Activated CD8-positive, alpha-beta T cell treated with anti-CD3 and anti-CD28 coated beads for 36 hours (primary cell): ENCODE measurements at regions of chr1 and their contacts with region 1.

Region 1: DNA sequence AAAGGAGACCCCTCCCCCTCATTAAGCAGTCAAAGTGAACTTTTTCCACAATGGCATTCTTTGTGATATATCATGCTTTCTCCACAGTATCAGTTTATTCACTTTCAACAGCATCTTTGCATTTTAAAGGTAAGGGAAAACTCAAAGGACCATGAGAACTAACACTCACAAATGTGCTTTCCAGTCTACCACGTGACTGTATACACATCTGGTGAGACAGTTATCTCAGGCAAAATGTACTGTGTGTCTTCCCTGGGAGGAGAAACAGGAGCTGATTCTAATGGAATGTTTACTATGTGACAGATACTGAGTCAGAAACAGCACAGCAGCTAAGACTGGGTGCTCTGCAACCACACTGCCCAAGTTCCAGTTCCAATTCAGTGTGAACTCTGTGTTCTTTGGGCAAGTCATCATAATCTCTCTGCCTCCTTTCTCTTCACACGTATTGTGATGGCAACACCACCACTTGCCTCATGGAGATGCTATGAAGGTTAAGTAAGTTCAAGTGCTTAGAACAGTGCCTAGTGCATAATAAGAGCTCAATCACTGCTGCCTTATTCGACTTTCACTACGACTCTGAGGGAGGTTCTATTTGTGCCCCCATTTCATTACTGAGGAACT is 79.0 kb downstream of the SLC45A1 start:
- DNase-seq: peak; percentile 60
- ATAC-seq: peak; percentile 87
- H3K4me3 Mint-ChIP-seq: peak overlapping the region; percentile 17
- H3K27ac Mint-ChIP-seq: peak overlapping the region; percentile 83
- H3K4me1 Mint-ChIP-seq: peaks cover 65% of the 10 kb centered on the region
- H3K27me3 Mint-ChIP-seq: no peaks in the 10 kb centered on the region
- CTCF ChIP-seq: no peak

Region 2: GRCh38 chr1:8154621-8155052 is 242.3 kb before region 1 on chr1:
- CTCF ChIA-PET with region 1: no interaction called
- POLR2A ChIA-PET with region 1: no interaction called
- intact Hi-C with region 1: no loop called
- DNase-seq: no peak
- ATAC-seq: no peak
- H3K4me3 Mint-ChIP-seq: no peak overlapping the region
- H3K27ac Mint-ChIP-seq: no peak overlapping the region
- H3K4me1 Mint-ChIP-seq: peaks cover 38% of the 10 kb centered on the region
- H3K27me3 Mint-ChIP-seq: peaks cover 22% of the 10 kb centered on the region
- CTCF ChIP-seq: no peak

Region 3: DNA sequence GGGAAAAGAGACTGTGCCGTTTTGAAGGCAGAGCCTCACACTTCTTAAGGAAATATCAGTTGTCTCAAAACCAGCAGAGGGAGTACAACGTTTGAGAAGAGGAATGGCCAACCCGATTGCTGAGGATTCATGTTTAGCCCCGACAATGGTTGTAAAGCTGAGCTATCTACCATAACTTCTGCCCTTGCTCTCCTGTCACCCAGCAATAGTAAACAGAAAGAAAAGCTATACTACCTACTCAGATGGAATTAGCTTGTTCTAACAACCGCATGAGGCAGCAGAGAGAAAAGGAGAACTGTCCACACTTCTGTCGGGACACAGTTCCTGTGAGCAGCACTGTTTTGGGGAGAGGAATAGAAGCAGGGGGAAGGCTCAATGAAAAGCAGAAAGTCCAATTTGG is 12.2 kb after region 1 on chr1:
- CTCF ChIA-PET with region 1: interaction called, 6 read pairs
- POLR2A ChIA-PET with region 1: interaction called, 14 read pairs
- intact Hi-C with region 1: no loop called
- DNase-seq: no peak
- ATAC-seq: peak; percentile 49
- H3K4me3 Mint-ChIP-seq: no peak overlapping the region
- H3K27ac Mint-ChIP-seq: peak overlapping the region; percentile 58
- H3K4me1 Mint-ChIP-seq: peaks cover 55% of the 10 kb centered on the region
- H3K27me3 Mint-ChIP-seq: no peaks in the 10 kb centered on the region
- CTCF ChIP-seq: peak; percentile 42

Region 4: DNA sequence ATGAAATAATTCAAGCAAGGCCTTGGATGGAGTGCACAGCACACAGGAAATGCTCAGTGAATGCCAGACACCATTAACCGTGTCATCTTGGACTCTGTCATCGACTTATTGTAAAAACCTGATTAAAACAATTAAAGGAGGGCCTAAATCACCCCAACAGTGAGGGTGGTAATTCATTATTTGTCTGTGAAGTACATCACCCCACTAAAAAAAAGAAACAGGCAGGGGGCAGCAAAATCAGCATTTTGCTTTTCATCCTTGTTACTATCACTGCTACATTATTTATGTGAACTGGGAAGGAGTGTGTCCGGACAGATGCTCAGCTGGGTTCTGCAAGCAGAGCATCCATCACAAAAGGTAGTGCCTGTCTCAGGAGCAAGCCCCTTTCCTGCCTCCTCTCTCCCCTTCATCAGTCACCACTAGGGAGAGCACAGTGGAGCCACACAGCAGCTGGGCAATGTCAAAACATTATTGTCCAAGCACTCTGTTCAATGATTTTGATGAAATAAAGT is 322.0 kb after region 1 on chr1:
- CTCF ChIA-PET with region 1: no interaction called
- POLR2A ChIA-PET with region 1: no interaction called
- intact Hi-C with region 1: no loop called
- DNase-seq: peak; percentile 11
- ATAC-seq: no peak
- H3K4me3 Mint-ChIP-seq: no peak overlapping the region
- H3K27ac Mint-ChIP-seq: no peak overlapping the region
- H3K4me1 Mint-ChIP-seq: peaks cover 26% of the 10 kb centered on the region
- H3K27me3 Mint-ChIP-seq: no peaks in the 10 kb centered on the region
- CTCF ChIP-seq: peak; percentile 32